ENCODE measurements at regions of chr15 and their contacts with region 1.

Region 1: GRCh38 chr15:31128919-31129768 is 27.6 kb upstream of the TRPM1 start:
- DNase-seq: peak; percentile 47 to 81 (median 72)
- ATAC-seq: peak; percentile 91
- H3K4me3 ChIP-seq: no peak overlapping the region
- H3K4me3 Mint-ChIP-seq: no peak overlapping the region
- H3K27ac ChIP-seq: no peak overlapping the region
- H3K27ac Mint-ChIP-seq: no peak overlapping the region
- H3K4me1 ChIP-seq: no peaks in the 10 kb centered on the region
- H3K4me1 Mint-ChIP-seq: peaks cover 0 to 4% (median 0%) of the 10 kb centered on the region in 7 donors
- H3K27me3 ChIP-seq: no peaks in the 10 kb centered on the region
- H3K27me3 Mint-ChIP-seq: peaks cover 0 to 6% (median 0%) of the 10 kb centered on the region in 5 donors

Region 2: GRCh38 chr15:30791239-30792175 is 337.6 kb before region 1 on chr15:
- CTCF ChIA-PET with region 1: no interaction called
- POLR2A ChIA-PET with region 1: no interaction called
- intact Hi-C with region 1: loop called in 1 of 2 experiments (anchors 5 kb)
- DNase-seq: no peak
- ATAC-seq: no peak
- H3K4me3 ChIP-seq: no peak overlapping the region
- H3K4me3 Mint-ChIP-seq: no peak overlapping the region
- H3K27ac ChIP-seq: no peak overlapping the region
- H3K27ac Mint-ChIP-seq: no peak overlapping the region
- H3K4me1 ChIP-seq: no peaks in the 10 kb centered on the region
- H3K4me1 Mint-ChIP-seq: no peaks in the 10 kb centered on the region
- H3K27me3 ChIP-seq: no peaks in the 10 kb centered on the region
- H3K27me3 Mint-ChIP-seq: peaks cover 4 to 23% (median 16%) of the 10 kb centered on the region in 5 donors

Region 3: GRCh38 chr15:30859091-30859874 is 269.9 kb before region 1 on chr15:
- CTCF ChIA-PET with region 1: interaction called, 3 read pairs
- POLR2A ChIA-PET with region 1: no interaction called
- intact Hi-C with region 1: loop called in 1 of 2 experiments (anchors 1 kb)
- DNase-seq: peak in 6 of 9 donors; percentile 13 to 44 (median 36)
- ATAC-seq: peak; percentile 60
- H3K4me3 ChIP-seq: no peak overlapping the region
- H3K4me3 Mint-ChIP-seq: no peak overlapping the region
- H3K27ac ChIP-seq: no peak overlapping the region
- H3K27ac Mint-ChIP-seq: no peak overlapping the region
- H3K4me1 ChIP-seq: no peaks in the 10 kb centered on the region
- H3K4me1 Mint-ChIP-seq: peaks cover 4 to 14% (median 9%) of the 10 kb centered on the region in 7 donors
- H3K27me3 ChIP-seq: no peaks in the 10 kb centered on the region
- H3K27me3 Mint-ChIP-seq: no peaks in the 10 kb centered on the region

Region 4: GRCh38 chr15:30889196-30889595 is 239.9 kb before region 1 on chr15:
- CTCF ChIA-PET with region 1: interaction called, 5 read pairs
- POLR2A ChIA-PET with region 1: no interaction called
- intact Hi-C with region 1: loop called in 1 of 2 experiments (anchors 1 kb)
- DNase-seq: no peak
- ATAC-seq: no peak
- H3K4me3 ChIP-seq: no peak overlapping the region
- H3K4me3 Mint-ChIP-seq: no peak overlapping the region
- H3K27ac ChIP-seq: no peak overlapping the region
- H3K27ac Mint-ChIP-seq: no peak overlapping the region
- H3K4me1 ChIP-seq: no peaks in the 10 kb centered on the region
- H3K4me1 Mint-ChIP-seq: peaks cover 0 to 12% (median 0%) of the 10 kb centered on the region in 7 donors
- H3K27me3 ChIP-seq: no peaks in the 10 kb centered on the region
- H3K27me3 Mint-ChIP-seq: no peaks in the 10 kb centered on the region

Region 5: DNA sequence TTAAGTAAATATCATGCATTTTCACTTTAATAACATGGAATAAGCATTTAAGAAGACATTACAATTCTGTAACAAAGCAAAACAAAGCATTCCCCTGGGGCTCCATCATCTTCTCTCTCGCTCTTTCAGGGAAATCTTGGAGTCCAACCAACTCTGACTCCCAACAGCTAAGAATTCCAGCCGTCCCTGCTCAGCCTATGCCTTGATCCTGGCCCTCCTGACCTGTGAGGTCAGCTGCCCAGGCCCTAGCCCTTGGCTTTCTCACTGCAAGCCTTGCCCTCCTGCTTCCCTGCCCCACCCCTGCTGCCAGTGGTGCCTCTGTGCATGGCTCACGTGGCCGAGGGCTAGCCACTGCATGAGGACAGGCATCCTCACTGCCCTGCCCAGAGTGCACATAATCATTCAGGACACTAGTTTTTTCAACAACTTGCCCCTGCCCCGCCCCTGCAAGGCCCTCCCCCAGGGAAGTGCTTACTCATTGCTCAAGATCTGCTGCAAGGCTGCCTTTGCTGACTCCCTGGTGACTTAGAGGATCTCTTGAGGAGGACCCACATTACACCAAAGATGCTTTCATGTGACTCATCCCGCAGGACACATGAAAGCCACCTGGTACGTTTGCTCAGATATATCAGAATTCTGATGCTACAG is 175.3 kb before region 1 on chr15:
- CTCF ChIA-PET with region 1: interaction called, 5 read pairs
- POLR2A ChIA-PET with region 1: no interaction called
- intact Hi-C with region 1: loop called in 1 of 2 experiments (anchors 10 kb)
- DNase-seq: no peak
- ATAC-seq: peak; percentile 60
- H3K4me3 ChIP-seq: no peak overlapping the region
- H3K4me3 Mint-ChIP-seq: no peak overlapping the region
- H3K27ac ChIP-seq: no peak overlapping the region
- H3K27ac Mint-ChIP-seq: peak overlapping the region in 7 of 9 donors; percentile 12 to 81 (median 72)
- H3K4me1 ChIP-seq: no peaks in the 10 kb centered on the region
- H3K4me1 Mint-ChIP-seq: peaks cover 0 to 11% (median 0%) of the 10 kb centered on the region in 7 donors
- H3K27me3 ChIP-seq: no peaks in the 10 kb centered on the region
- H3K27me3 Mint-ChIP-seq: no peaks in the 10 kb centered on the region

Region 6: GRCh38 chr15:30962079-30962478 is 167.1 kb before region 1 on chr15:
- CTCF ChIA-PET with region 1: interaction called, 5 read pairs
- POLR2A ChIA-PET with region 1: no interaction called
- intact Hi-C with region 1: loop called (anchors 5 to 10 kb)
- DNase-seq: no peak
- ATAC-seq: no peak
- H3K4me3 ChIP-seq: no peak overlapping the region
- H3K4me3 Mint-ChIP-seq: peak overlapping the region in 1 of 10 donors; percentile 36
- H3K27ac ChIP-seq: no peak overlapping the region
- H3K27ac Mint-ChIP-seq: peak overlapping the region in 6 of 9 donors; percentile 43 to 80 (median 72)
- H3K4me1 ChIP-seq: peaks cover 0 to 8% of the 10 kb centered on the region in 2 donors
- H3K4me1 Mint-ChIP-seq: peaks cover 8 to 44% (median 36%) of the 10 kb centered on the region in 7 donors
- H3K27me3 ChIP-seq: no peaks in the 10 kb centered on the region
- H3K27me3 Mint-ChIP-seq: no peaks in the 10 kb centered on the region